ENCODE measurements at regions of chr5 and their contacts with region 1.

Region 1: DNA sequence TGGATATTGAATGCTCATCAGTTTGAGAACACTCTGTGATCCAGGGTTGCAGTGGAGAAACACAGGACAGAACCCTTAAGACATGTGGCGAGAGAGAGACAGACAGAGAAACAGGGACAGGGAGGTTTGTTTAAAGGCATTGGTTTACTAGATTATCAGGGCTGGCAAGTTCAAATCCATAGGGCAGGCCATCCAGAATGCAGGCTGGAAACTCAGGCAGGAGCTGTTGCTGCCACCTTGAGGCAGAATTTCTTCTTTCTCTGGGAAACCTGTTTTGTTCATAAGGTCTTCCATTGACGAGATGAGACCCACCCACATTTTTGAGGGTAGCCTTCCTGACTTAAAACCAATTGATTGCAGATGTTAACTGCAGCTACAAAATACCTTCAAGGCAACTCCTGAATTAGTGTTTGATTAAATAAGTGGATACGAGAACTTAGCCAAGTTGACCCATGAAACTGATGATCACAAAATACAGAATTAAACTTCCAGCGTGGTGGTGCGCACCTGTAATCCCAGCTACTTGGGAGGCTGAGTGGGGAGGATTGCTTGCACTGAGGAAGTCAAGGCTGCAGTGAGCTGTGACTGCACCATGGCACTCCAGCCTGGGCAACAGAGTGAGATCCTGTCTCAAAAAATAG is 55.9 kb downstream of the NSUN2 start:
- DNase-seq: peak in 1 of 2 donors; percentile 49
- ATAC-seq: peak; percentile 32 to 73 (median 56)
- H3K4me3 ChIP-seq: no peak overlapping the region
- H3K27ac ChIP-seq: peak overlapping the region; percentile 48
- H3K4me1 ChIP-seq: peaks cover 6% of the 10 kb centered on the region
- H3K27me3 ChIP-seq: no peaks in the 10 kb centered on the region
- CTCF ChIP-seq: peak; percentile 60

Region 2: DNA sequence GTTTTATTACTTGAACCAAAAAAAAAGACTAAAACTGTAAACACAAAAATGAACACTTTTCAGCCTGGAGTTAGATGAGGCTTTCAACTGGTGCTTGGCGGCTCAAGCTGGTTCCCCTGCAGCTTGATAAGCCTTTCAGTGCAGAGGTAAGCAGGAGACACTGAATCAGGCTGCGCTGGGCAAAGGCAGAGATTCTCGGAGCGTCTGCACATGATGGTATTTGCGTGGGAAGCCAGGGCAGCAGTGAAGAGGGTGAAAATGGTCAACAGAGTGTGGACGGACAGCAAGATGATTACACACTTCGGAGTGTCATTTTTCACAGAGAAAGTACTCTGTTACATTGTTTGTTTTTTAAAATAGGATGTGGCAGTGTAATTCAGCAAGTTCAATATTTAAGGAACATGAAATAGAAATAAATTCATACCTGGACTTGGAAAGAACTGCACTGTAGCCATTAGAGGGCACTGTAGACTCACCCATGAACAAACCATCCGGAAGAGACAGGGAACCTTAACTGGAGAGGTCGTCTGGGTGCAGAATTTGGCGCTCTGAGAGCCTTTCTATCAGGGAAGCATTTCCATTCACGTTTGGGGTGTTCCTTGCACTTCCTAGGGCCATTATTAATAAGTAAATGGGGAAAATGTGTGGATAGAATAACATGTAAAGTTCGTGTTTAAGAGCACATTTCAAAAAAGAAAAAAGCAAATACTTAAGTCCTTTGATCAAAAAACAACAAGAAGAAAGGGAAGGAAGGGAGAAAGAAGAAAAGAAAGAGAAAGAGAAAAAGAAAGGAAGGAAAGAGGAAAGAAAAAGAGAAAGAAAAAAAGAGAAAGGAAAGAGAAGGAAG is 1084.7 kb before region 1 on chr5:
- intact Hi-C with region 1: loop called (anchors 5 kb)
- DNase-seq: no peak
- ATAC-seq: peak in 3 of 4 donors; percentile 37 to 58 (median 54)
- H3K4me3 ChIP-seq: no peak overlapping the region
- H3K27ac ChIP-seq: no peak overlapping the region
- H3K4me1 ChIP-seq: peaks cover 46% of the 10 kb centered on the region
- H3K27me3 ChIP-seq: no peaks in the 10 kb centered on the region
- CTCF ChIP-seq: peak; percentile 71

Region 3: DNA sequence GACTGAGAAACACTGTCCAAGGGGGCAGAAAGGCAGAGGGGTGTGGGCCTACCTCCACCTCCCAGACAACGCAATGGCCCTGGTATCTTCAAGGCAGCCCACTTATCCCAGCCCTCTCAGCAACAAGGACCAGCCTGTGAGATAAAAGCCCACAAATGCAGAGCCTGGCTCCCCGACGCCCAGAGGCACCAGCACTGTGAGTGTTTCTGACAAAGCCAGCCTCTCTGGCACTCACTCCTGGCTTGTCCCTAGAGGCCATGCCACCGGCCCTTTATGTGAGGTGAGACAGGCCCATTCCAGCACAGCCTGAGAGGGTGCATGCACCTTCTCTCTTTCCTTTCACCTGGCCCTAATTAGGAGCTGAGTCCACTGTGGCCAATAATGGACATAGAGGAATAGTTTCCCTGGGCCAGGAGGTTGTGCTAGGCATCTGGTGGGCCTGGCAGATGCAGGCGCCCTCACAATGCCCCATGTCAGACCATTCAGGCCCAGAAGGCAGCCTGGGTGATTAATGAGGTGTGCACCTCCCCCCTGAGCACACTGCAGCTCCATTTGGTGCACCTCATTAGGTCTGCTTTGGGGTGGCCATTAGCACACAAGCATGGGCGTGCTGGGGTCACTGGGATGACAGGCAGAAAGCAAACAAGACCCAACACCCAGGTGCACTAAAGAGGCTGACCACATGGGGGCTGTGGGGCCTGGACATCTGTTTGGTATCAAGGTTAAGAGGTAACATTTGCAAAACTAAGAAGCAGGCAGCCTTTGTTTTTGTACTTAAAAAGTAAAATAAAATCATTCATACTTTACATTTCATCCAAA is 374.6 kb before region 1 on chr5:
- intact Hi-C with region 1: loop called in 1 of 2 experiments (anchors 10 kb)
- DNase-seq: no peak
- ATAC-seq: peak in 1 of 4 donors; percentile 60
- H3K4me3 ChIP-seq: no peak overlapping the region
- H3K27ac ChIP-seq: no peak overlapping the region
- H3K4me1 ChIP-seq: no peaks in the 10 kb centered on the region
- H3K27me3 ChIP-seq: no peaks in the 10 kb centered on the region
- CTCF ChIP-seq: peak; percentile 16

Region 4: GRCh38 chr5:6377905-6378765 is 198.8 kb before region 1 on chr5 and contains the start of gene MED10:
- intact Hi-C with region 1: loop called in 1 of 2 experiments (anchors 5 kb)
- DNase-seq: peak; percentile 95 to 98
- ATAC-seq: peak; percentile 99 to 100 (median 100)
- H3K4me3 ChIP-seq: peak within 1 kb of the TSS; percentile 98
- H3K27ac ChIP-seq: peak within 1 kb of the TSS; percentile 95
- H3K4me1 ChIP-seq: peaks cover 9% of the 10 kb centered on the region
- H3K27me3 ChIP-seq: no peaks in the 10 kb centered on the region
- CTCF ChIP-seq: no peak
- total RNA-seq, gene MED10: 18.8 to 52.4 (median 26.5) TPM